Calu3 (cell line): ENCODE measurements at regions of chr10 and their contacts with region 1.

Region 1: GRCh38 chr10:5813287-5814109 is at the start of gene GDI2:
- DNase-seq: peak; percentile 97
- H3K4me3 Mint-ChIP-seq: peak within 1 kb of the TSS; percentile 86
- H3K27ac Mint-ChIP-seq: peak within 1 kb of the TSS; percentile 97
- H3K4me1 Mint-ChIP-seq: peaks cover 18% of the 10 kb centered on the region
- H3K27me3 Mint-ChIP-seq: no peaks in the 10 kb centered on the region
- CTCF ChIP-seq: no peak
- total RNA-seq, gene GDI2: 202 and 215 TPM in 2 replicates

Region 2: DNA sequence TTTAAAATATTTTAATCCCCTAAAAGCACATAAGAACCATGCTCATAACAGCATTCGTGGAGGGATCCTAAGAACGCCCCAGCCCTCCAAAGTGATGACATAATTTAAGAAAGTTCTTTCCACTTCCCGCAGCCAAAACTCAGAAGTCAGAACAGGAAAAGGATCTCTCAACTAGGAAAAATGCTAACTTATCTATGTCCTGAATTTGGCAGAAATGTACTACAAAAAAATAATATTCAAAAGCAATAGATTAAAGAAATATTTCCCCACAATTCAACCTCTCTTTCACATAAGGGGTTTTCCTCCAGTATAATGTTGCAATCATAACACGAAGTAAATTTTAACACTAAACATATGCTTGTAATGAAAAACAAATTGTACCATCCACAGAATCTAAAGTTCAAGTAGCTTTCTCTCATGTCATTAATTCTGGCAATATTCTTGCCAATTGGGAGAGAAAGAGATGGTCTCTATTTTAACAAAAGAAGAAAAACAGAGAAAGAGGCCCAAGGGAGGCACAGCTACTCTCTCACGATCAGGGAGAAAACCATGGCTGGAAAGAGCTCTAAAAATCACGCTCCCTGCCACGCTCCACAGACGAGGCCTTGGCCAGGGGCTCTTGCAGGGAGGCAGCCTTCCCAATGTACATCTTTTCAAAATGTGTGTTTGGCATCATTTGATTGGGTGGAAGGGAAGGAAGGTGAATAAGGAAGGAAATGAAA is 170.0 kb before region 1 on chr10:
- CTCF ChIA-PET with region 1: no interaction called
- intact Hi-C with region 1: no loop called
- DNase-seq: no peak
- H3K4me3 Mint-ChIP-seq: no peak overlapping the region
- H3K27ac Mint-ChIP-seq: no peak overlapping the region
- H3K4me1 Mint-ChIP-seq: no peaks in the 10 kb centered on the region
- H3K27me3 Mint-ChIP-seq: no peaks in the 10 kb centered on the region
- CTCF ChIP-seq: no peak

Region 3: GRCh38 chr10:5679606-5680005 is 133.9 kb before region 1 on chr10:
- CTCF ChIA-PET with region 1: interaction called, 11 read pairs
- intact Hi-C with region 1: no loop called
- DNase-seq: no peak
- H3K4me3 Mint-ChIP-seq: no peak overlapping the region
- H3K27ac Mint-ChIP-seq: no peak overlapping the region
- H3K4me1 Mint-ChIP-seq: peaks cover 10% of the 10 kb centered on the region
- H3K27me3 Mint-ChIP-seq: peaks cover 28% of the 10 kb centered on the region
- CTCF ChIP-seq: no peak

Region 4: DNA sequence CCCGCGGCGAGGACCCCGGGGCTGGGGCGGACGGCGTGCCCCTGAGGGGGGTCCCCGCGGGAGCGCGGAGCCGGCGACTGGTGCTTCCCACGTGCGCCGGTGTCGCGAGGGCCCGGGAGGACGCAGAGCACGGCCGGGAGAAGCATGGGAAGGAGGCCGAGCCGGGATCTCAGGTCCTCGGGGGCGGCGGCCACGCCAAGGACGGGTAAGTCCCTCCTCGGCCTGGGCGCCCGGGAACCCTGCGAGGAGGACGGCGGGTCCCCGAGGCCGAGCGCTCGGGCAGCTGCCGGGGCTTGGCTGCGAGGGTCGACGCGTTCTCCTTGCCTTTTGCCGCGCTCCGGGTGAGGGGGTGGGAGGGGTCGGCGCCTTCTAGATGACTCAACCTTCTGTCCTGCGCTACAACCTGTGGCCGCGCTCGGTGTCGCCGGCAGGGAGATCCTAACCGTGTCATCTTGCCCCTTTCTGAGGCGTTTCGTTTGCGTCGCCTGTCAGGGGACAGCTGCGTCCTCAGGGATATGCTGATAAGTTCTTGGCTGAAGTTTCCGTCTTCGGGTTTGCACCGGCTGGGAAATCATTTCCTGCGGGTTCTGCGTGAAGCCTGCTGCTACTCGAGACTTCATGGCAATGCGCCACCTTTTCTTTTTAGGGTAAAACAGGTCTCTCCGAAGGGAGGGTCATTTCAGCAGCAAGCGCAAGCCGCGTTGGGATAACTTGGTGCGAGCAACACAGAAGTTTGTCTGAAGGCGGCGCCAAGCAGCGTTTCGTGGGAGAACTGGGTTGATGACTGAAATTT is 128.3 kb before region 1 on chr10:
- CTCF ChIA-PET with region 1: no interaction called
- intact Hi-C with region 1: loop called (anchors 2 kb)
- DNase-seq: peak; percentile 64
- H3K4me3 Mint-ChIP-seq: peak overlapping the region; percentile 84
- H3K27ac Mint-ChIP-seq: peak overlapping the region; percentile 90
- H3K4me1 Mint-ChIP-seq: peaks cover 18% of the 10 kb centered on the region
- H3K27me3 Mint-ChIP-seq: no peaks in the 10 kb centered on the region
- CTCF ChIP-seq: peak; percentile 11

Region 5: DNA sequence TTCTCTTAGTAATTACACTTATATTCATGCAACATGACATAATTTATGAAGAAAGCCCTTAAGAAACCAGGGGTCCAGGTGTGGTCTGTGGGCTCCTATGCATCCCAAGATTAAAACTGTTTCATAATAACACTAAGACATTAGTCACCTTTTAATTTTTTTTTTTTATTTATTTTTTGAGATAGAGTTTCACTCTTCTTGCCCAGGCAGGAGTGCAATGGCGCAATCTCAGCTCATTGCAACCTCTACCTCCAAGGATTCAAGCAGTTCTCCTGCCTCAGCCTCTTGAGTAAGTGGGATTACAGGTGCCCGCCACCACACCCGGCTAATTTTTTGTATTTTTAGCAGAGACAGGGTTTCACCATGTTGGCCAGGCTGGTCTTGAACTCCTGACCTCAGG is 12.7 kb before region 1 on chr10:
- CTCF ChIA-PET with region 1: no interaction called
- intact Hi-C with region 1: no loop called
- DNase-seq: no peak
- H3K4me3 Mint-ChIP-seq: no peak overlapping the region
- H3K27ac Mint-ChIP-seq: no peak overlapping the region
- H3K4me1 Mint-ChIP-seq: no peaks in the 10 kb centered on the region
- H3K27me3 Mint-ChIP-seq: no peaks in the 10 kb centered on the region
- CTCF ChIP-seq: no peak

Region 6: GRCh38 chr10:5832936-5833335 is 19.4 kb after region 1 on chr10:
- CTCF ChIA-PET with region 1: no interaction called
- intact Hi-C with region 1: no loop called
- DNase-seq: peak; percentile 78
- H3K4me3 Mint-ChIP-seq: peak overlapping the region; percentile 90
- H3K27ac Mint-ChIP-seq: no peak overlapping the region
- H3K4me1 Mint-ChIP-seq: peaks cover 8% of the 10 kb centered on the region
- H3K27me3 Mint-ChIP-seq: no peaks in the 10 kb centered on the region
- CTCF ChIP-seq: no peak

Region 7: GRCh38 chr10:5873515-5873995 is 60.1 kb after region 1 on chr10:
- CTCF ChIA-PET with region 1: interaction called, 3 read pairs
- intact Hi-C with region 1: loop called (anchors 5 kb)
- DNase-seq: peak; percentile 71
- H3K4me3 Mint-ChIP-seq: no peak overlapping the region
- H3K27ac Mint-ChIP-seq: no peak overlapping the region
- H3K4me1 Mint-ChIP-seq: no peaks in the 10 kb centered on the region
- H3K27me3 Mint-ChIP-seq: no peaks in the 10 kb centered on the region
- CTCF ChIP-seq: no peak

Region 8: DNA sequence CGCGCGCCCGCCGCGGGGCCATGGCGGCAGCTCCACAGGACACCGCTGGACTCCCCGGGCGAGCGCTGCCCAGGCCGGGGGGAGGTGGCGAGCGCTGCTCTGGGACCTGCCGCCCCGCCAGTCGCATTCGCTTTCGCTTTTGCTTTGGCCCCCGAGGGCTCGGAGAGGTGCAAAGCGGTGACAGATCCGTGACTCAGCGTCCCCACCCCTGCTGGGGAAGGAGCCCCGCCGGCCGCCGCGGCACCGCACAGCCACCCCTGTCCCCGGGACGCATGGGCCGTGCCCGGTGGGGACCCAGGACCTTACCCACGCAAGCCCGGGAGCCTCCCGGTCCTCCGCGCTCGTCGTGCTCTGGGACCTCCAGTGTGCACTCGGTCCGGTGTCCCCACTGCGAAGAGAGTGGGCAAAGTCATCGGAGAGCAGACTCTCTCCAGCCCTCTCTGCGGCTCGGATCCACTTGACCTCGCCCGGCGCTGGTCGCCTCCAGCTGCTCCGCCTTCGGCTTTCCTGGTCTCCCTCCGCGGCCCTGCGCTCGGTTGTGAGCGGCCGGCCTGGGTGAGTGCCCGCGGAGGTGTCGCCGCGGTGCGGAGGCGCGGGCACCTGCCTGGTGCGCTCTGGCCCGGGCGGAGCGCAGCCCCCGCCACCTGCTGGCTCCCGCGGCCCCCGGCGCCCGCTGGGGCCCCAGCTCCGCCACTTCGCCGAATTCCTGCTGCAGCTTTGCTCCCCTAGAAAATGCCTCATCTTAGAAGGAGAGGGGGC is 164.2 kb after region 1 on chr10 and contains the start of gene IL15RA:
- CTCF ChIA-PET with region 1: no interaction called
- intact Hi-C with region 1: loop called (anchors 5 kb)
- DNase-seq: peak; percentile 92
- H3K4me3 Mint-ChIP-seq: peak within 1 kb of the TSS; percentile 84
- H3K27ac Mint-ChIP-seq: peak within 1 kb of the TSS; percentile 87
- H3K4me1 Mint-ChIP-seq: peaks cover 13% of the 10 kb centered on the region
- H3K27me3 Mint-ChIP-seq: no peaks in the 10 kb centered on the region
- CTCF ChIP-seq: no peak
- total RNA-seq, gene IL15RA: 28.6 and 42.4 TPM in 2 replicates